Mammary epithelial cell (primary cell): ENCODE measurements at regions of chr17 and their contacts with region 1.

Region 1: GRCh38 chr17:78568494-78569115 is 8.6 kb downstream of the DNAH17 start:
- DNase-seq: peak; percentile 32
- H3K4me3 ChIP-seq: no peak overlapping the region
- H3K27ac ChIP-seq: no peak overlapping the region
- H3K4me1 ChIP-seq: no peaks in the 10 kb centered on the region
- H3K27me3 ChIP-seq: no peaks in the 10 kb centered on the region
- CTCF ChIP-seq: no peak

Region 2: DNA sequence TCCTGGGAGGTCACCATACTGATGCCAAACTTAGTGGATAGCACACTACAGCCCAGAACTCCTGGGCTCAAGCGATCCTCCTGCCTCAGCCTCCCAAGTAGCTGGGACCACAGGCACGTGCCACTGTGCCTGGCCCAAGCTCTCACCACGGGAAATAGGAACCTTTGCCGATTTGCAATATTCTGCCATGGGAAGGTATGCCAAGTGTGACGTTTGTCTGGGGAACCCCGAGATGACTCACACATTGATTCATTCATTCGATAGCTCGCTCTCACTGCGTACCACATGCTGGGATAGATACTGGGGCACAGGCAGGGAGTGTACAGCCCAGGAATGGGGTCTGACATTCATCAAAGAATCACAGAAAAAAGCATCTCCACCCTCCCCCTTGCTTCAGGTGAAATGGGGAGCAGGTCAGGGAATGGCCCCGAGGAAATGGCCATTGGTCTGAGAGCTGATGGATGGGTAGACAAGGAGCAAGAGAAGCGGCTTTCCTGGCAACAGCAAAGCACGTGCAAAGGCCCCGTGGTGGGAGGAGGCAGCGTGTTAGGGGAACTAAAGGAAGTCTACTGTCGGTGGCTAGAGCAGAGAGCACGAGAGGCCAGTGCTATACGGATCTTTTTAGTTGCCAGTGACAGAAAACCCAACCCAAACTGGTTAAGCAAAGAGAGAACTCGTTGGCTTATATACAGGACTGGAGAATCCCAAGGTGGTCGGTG is 35.5 kb before region 1 on chr17:
- CTCF ChIA-PET with region 1: no interaction called
- dilution Hi-C with region 1: loop called (anchors 5 kb)
- in situ Hi-C with region 1: no loop called
- intact Hi-C with region 1: no loop called
- DNase-seq: peak; percentile 95
- H3K4me3 ChIP-seq: no peak overlapping the region
- H3K27ac ChIP-seq: peak overlapping the region; percentile 63
- H3K4me1 ChIP-seq: peaks cover 31% of the 10 kb centered on the region
- H3K27me3 ChIP-seq: no peaks in the 10 kb centered on the region
- CTCF ChIP-seq: no peak

Region 3: GRCh38 chr17:78598013-78598471 is 29.4 kb after region 1 on chr17:
- CTCF ChIA-PET with region 1: interaction called, 10 read pairs
- dilution Hi-C with region 1: no loop called
- in situ Hi-C with region 1: no loop called
- intact Hi-C with region 1: no loop called
- DNase-seq: peak; percentile 12
- H3K4me3 ChIP-seq: no peak overlapping the region
- H3K27ac ChIP-seq: no peak overlapping the region
- H3K4me1 ChIP-seq: no peaks in the 10 kb centered on the region
- H3K27me3 ChIP-seq: no peaks in the 10 kb centered on the region
- CTCF ChIP-seq: no peak

Region 4: DNA sequence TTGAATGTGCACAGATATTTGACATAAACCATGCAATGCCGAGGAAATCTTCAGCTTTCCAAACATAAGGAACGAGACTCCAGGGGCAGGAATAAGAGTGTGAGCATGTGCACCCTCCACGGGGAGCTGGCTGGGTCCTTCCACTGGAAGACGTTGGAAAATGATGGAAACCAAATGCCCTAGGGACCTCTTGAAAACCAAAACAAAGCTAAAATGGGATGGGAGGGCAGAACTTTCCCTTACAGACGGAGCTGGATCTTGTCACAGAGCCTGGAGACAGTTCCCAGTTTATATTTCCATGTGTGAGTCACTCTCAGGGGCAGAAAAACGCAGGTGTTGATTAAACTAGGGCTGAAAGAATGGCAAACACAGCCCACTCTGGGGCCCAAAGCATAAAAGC is 43.0 kb after region 1 on chr17:
- CTCF ChIA-PET with region 1: no interaction called
- dilution Hi-C with region 1: loop called (anchors 5 kb)
- in situ Hi-C with region 1: no loop called
- intact Hi-C with region 1: no loop called
- DNase-seq: no peak
- H3K4me3 ChIP-seq: no peak overlapping the region
- H3K27ac ChIP-seq: no peak overlapping the region
- H3K4me1 ChIP-seq: no peaks in the 10 kb centered on the region
- H3K27me3 ChIP-seq: no peaks in the 10 kb centered on the region
- CTCF ChIP-seq: no peak